Mammary epithelial cell (primary cell): ENCODE measurements at regions of chr9 and their contacts with region 1.

Region 1: GRCh38 chr9:72943844-72944462 is 8.9 kb downstream of the ALDH1A1 start:
- DNase-seq: no peak
- H3K4me3 ChIP-seq: no peak overlapping the region
- H3K27ac ChIP-seq: no peak overlapping the region
- H3K4me1 ChIP-seq: no peaks in the 10 kb centered on the region
- H3K27me3 ChIP-seq: no peaks in the 10 kb centered on the region
- CTCF ChIP-seq: no peak

Region 2: DNA sequence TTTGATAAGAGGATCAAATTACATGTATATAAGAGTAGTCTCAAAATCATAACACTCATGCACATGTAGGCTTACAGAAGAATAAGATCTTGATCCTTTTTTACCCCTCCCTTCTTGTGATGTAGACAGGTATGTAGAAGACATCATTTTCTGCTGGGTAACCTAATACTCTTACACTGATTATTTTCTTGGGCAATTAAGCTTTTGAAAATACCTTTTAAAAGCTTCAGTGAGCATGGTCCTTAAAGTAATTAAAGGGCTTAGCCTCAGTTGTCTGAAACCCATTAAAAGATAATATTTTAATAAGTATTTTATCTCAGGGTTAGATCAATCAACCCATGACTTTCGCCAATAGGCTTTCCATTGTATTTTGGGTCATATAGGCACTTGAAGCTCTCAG is 41.7 kb before region 1 on chr9:
- CTCF ChIA-PET with region 1: no interaction called
- dilution Hi-C with region 1: no loop called
- in situ Hi-C with region 1: no loop called
- intact Hi-C with region 1: loop called (anchors 5 kb)
- DNase-seq: no peak
- H3K4me3 ChIP-seq: no peak overlapping the region
- H3K27ac ChIP-seq: no peak overlapping the region
- H3K4me1 ChIP-seq: no peaks in the 10 kb centered on the region
- H3K27me3 ChIP-seq: no peaks in the 10 kb centered on the region
- CTCF ChIP-seq: no peak